ENCODE measurements at regions of chr11 and their contacts with region 1.

Region 1: GRCh38 chr11:123110356-123110755 is 48.4 kb upstream of the HSPA8 start:
- DNase-seq: no peak
- H3K4me3 ChIP-seq: no peak overlapping the region
- H3K27ac ChIP-seq: no peak overlapping the region
- H3K4me1 ChIP-seq: peaks cover 2% of the 10 kb centered on the region
- H3K27me3 ChIP-seq: no peaks in the 10 kb centered on the region
- CTCF ChIP-seq: no peak
- EP300 ChIP-seq: no peak
- POLR2A ChIP-seq: no peak

Region 2: GRCh38 chr11:123020968-123021367 is 89.4 kb before region 1 on chr11:
- intact Hi-C with region 1: no loop called
- DNase-seq: no peak
- H3K4me3 ChIP-seq: no peak overlapping the region
- H3K27ac ChIP-seq: no peak overlapping the region
- H3K4me1 ChIP-seq: no peaks in the 10 kb centered on the region
- H3K27me3 ChIP-seq: no peaks in the 10 kb centered on the region
- CTCF ChIP-seq: no peak
- EP300 ChIP-seq: no peak
- POLR2A ChIP-seq: no peak

Region 3: DNA sequence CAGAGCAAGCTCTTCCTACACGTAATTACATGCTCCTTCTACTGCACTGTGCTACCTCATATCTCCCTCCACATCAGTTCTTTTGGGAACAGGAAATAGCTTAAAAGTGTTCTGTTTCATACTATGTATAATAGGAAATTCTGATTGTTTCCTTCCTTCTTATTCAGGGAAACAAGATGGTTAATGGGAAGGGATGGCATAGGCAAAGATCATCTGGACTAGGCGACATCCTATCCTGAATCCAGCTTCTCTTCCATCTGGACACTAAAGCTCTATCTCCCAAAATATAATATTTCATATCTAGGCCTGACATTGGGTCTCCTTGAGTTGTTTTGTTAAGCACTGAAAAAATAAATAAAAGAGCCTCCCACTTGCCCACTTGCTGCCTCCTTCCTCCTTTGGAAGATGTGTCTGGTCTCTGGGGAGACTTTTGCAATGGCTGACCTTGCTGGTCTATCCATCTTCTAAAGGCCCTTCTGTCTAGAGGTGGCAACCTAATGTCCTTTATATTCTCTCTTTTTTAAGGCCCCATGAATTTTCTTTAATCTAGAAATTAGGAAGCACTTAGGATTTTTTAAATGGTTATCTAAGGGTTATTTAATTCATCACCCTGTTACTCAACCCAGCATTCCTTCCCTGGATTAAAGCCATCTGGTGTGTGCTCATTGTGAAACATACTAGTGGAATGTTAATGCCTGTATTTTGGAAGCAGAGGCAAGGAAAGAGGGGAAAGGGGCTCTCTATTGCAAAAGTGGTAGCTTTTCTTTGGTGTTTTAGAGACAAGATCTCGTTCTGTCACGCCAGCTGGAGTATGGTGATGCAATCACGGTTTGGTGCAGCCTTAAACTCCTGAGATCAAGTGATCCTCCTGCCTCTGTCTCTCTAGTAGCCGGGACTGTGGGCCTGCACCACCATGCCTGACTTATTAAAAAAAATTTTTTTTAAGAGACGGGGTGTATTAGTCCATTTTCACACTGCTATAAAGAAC is 64.1 kb after region 1 on chr11:
- intact Hi-C with region 1: loop called in 1 of 4 experiments (anchors 10 kb)
- DNase-seq: peak in 3 of 5 donors; percentile 55 to 80 (median 66)
- H3K4me3 ChIP-seq: no peak overlapping the region
- H3K27ac ChIP-seq: peak overlapping the region in 1 of 2 donors; percentile 76
- H3K4me1 ChIP-seq: peaks cover 21% of the 10 kb centered on the region
- H3K27me3 ChIP-seq: no peaks in the 10 kb centered on the region
- CTCF ChIP-seq: no peak
- EP300 ChIP-seq: peak; percentile 32
- POLR2A ChIP-seq: no peak

Region 4: GRCh38 chr11:123246749-123247495 is 136.6 kb after region 1 on chr11:
- intact Hi-C with region 1: loop called in 3 of 4 experiments (anchors 2 to 5 kb)
- DNase-seq: peak; percentile 78 to 87 (median 85)
- H3K4me3 ChIP-seq: no peak overlapping the region
- H3K27ac ChIP-seq: no peak overlapping the region
- H3K4me1 ChIP-seq: peaks cover 2% of the 10 kb centered on the region
- H3K27me3 ChIP-seq: no peaks in the 10 kb centered on the region
- CTCF ChIP-seq: peak; percentile 83 to 93 (median 90)
- EP300 ChIP-seq: no peak
- POLR2A ChIP-seq: no peak